Activated naive CD4-positive, alpha-beta T cell treated with anti-CD3 and anti-CD28 coated beads for 36 hours (primary cell): ENCODE measurements at regions of chr2 and their contacts with region 1.

Region 1: DNA sequence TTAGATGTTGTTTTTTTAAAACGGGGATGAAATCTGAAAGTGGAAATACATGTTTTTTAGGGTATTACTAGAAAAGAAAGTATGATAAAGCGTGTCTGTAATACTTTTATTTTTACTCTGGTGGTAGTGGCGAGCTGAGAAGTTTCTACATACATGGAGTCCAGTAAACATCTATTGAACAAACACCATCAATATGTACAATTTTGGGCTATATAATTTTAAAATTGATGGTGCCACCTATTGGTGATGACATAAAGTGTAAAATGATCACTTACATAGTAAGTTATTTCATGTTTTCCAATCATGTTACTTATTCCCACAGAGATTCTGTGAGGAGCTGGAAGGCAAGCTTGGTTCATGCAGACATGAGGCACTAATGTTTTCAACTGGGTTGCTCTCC is 31.5 kb upstream of the NFE2L2 start:
- DNase-seq: no peak
- H3K4me3 Mint-ChIP-seq: no peak overlapping the region
- H3K27ac Mint-ChIP-seq: no peak overlapping the region
- H3K4me1 Mint-ChIP-seq: peaks cover 17% of the 10 kb centered on the region
- H3K27me3 Mint-ChIP-seq: no peaks in the 10 kb centered on the region

Region 2: DNA sequence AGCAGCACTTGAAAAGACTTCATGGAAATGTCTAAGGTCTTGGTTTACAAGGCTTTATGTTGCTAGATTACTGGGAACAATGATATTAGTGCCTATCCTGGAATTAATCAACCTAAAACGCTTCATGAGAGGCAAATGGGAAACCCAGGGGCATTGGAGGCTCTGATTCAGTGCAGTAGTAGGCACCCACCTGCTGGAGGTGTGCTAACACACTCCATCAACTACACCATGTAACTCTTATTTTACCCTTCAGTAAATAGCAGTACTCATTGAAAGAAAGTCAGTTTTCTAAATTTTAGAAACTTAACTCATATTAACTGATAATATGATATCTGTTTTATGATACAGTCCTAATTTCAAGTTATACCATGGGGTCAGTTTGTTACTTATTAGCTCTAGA is 100.8 kb before region 1 on chr2:
- CTCF ChIA-PET with region 1: interaction called, 6 read pairs
- intact Hi-C with region 1: loop called (anchors 1 kb)
- DNase-seq: peak; percentile 18
- H3K4me3 Mint-ChIP-seq: no peak overlapping the region
- H3K27ac Mint-ChIP-seq: no peak overlapping the region
- H3K4me1 Mint-ChIP-seq: no peaks in the 10 kb centered on the region
- H3K27me3 Mint-ChIP-seq: no peaks in the 10 kb centered on the region

Region 3: DNA sequence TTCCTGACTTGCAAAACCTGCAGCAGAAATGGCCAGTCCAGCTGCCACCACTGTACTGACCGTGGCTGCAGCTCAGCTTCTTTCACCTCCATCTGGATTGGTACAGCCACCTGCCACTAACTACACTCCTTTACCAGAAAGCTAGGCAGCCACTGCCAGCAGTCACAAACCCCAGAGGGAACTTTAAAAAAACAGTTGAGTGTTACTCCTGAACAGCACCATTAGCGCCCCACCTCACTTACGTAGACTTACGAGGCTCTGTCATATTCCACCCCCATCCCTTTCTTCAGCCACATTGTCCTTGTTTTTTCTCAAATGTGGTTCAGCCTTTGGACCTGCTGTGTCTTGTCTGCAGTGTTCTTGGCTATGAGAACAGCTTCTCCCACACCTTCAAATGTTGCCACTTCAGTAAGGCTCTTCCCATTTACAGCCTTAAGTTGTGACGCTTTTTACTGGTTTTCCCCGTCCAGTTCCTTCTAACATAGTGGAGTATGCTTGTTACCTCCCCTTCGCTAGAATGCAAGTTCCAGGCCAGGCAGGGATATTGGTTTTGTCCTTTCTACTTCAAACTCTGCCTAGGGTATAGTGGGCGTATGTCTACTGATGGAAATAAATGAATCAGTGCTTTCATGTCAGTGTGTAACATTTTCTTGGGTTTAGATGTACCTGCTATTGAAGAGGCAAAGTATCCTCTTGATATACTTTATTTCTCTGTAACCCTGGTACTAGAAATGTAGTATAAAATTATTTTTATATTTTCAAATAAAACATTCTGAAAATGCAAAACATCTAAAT is 66.4 kb before region 1 on chr2:
- CTCF ChIA-PET with region 1: interaction called, 11 read pairs
- intact Hi-C with region 1: no loop called
- DNase-seq: no peak
- H3K4me3 Mint-ChIP-seq: no peak overlapping the region
- H3K27ac Mint-ChIP-seq: peak overlapping the region; percentile 80
- H3K4me1 Mint-ChIP-seq: peaks cover 41% of the 10 kb centered on the region
- H3K27me3 Mint-ChIP-seq: no peaks in the 10 kb centered on the region

Region 4: GRCh38 chr2:177282181-177282641 is 13.8 kb before region 1 on chr2:
- CTCF ChIA-PET with region 1: interaction called, 21 read pairs
- intact Hi-C with region 1: no loop called
- DNase-seq: no peak
- H3K4me3 Mint-ChIP-seq: no peak overlapping the region
- H3K27ac Mint-ChIP-seq: no peak overlapping the region
- H3K4me1 Mint-ChIP-seq: no peaks in the 10 kb centered on the region
- H3K27me3 Mint-ChIP-seq: no peaks in the 10 kb centered on the region